ENCODE measurements at regions of chr17 and their contacts with region 1.

Region 1: GRCh38 chr17:21419299-21420239 is 43.4 kb downstream of the KCNJ12 start:
- DNase-seq: peak; percentile 48
- ATAC-seq: peak; percentile 72
- H3K4me3 Mint-ChIP-seq: no peak overlapping the region
- H3K27ac Mint-ChIP-seq: peak overlapping the region; percentile 27
- H3K4me1 Mint-ChIP-seq: peaks cover 15% of the 10 kb centered on the region
- H3K27me3 Mint-ChIP-seq: peaks cover 2% of the 10 kb centered on the region

Region 2: DNA sequence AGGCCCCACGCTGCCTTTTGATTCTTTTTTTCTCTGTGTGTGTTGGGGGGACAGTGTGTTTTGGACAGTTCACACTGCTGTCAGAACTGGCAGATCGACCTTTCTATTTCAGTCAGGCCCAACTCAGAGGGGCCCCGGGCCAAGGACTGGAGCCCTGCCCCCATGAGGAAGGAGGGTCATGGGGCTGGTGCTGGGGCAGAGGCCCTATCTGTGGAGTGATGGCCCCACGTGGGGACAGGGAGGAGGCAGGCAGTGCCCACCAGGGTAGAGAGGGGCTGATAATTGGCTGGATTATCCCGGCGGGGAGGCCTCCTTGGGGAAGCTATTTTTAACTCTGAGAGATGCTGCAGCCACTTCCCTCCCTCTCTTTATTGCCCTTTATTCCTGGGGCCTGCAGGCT is 49.1 kb before region 1 on chr17:
- CTCF ChIA-PET with region 1: no interaction called
- POLR2A ChIA-PET with region 1: no interaction called
- intact Hi-C with region 1: no loop called
- DNase-seq: no peak
- ATAC-seq: no peak
- H3K4me3 Mint-ChIP-seq: no peak overlapping the region
- H3K27ac Mint-ChIP-seq: no peak overlapping the region
- H3K4me1 Mint-ChIP-seq: no peaks in the 10 kb centered on the region
- H3K27me3 Mint-ChIP-seq: peaks cover 5% of the 10 kb centered on the region

Region 3: DNA sequence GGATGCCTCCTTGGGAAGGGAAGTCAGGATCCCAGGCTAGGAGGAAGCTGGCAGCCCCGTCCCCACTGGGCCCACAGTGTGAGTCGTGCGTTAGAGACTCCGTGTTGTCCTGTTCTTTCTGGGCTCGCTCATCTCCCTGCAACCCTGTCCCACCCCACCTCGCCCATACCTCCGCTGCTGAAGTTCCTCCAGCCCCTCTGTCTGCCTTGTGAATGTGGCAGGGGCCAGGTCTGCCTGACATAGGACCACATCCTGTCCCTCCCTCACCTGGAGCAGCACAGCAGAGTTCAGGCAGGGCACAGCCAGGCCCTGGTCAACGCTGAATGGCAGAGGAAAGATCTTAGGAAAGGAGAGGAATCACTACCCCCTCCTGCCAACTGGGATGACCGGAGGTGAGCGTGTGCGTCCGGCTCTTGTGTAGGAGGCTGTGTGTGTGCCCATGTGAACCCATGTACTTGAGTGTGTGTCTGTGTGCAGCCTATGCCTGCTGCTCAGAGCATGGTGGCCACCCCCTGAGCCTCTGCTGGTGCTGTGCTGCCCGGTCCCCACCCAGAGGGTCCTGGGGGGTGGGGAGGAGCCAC is 285.5 kb after region 1 on chr17:
- CTCF ChIA-PET with region 1: no interaction called
- POLR2A ChIA-PET with region 1: no interaction called
- intact Hi-C with region 1: loop called in 1 of 2 experiments (anchors 5 kb)
- DNase-seq: no peak
- ATAC-seq: no peak
- H3K4me3 Mint-ChIP-seq: no peak overlapping the region
- H3K27ac Mint-ChIP-seq: no peak overlapping the region
- H3K4me1 Mint-ChIP-seq: no peaks in the 10 kb centered on the region
- H3K27me3 Mint-ChIP-seq: no peaks in the 10 kb centered on the region

Measured in activated CD4-positive, alpha-beta T cell treated with anti-CD3 and anti-CD28 coated beads for 36 hours (primary cell).